Common myeloid progenitor, CD34-positive (primary cell): ENCODE measurements at regions of chr12 and their contacts with region 1.

Region 1: GRCh38 chr12:48765753-48766162 is 23.1 kb downstream of the ADCY6 start:
- DNase-seq: peak; percentile 22 to 69 (median 67)
- H3K4me3 ChIP-seq: peak overlapping the region in 2 of 7 experiments; percentile 12 to 26
- H3K27ac ChIP-seq: peak overlapping the region in 1 of 2 experiments; percentile 15
- H3K4me1 ChIP-seq: peaks cover 4 to 47% (median 19%) of the 10 kb centered on the region in 4 experiments
- H3K27me3 ChIP-seq: no peaks in the 10 kb centered on the region

Region 2: DNA sequence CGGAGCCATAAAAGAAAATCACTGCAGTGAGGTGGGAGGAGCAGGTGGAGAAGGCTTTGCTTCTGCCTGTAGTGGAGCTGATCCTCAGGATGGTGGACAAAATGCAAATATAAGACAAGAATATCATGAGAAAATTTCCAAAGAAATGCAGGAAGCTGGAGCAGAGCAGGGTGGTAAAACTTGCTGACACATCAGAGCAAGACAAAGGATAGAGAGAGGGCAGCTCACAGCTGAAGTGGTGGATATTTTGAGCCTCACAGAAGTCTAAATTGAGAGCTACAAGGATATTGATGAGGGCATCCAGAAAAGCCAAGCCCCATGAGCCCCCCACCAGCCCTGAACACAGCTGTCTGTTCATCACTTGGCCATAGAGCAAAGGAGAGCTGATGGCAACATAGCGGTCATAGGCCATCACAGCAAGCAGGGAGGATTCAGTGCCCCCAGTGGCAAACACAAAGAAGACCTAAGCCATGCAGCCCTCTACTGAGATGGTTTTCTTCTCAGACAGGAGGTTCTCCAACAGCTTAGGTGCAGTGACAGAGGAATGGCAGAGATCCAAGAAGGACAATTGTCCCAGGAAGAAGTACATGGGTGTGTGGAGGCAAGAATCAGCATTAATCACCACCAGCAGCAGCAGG is 323.4 kb before region 1 on chr12:
- CTCF ChIA-PET with region 1: no interaction called
- POLR2A ChIA-PET with region 1: no interaction called
- DNase-seq: peak in 1 of 3 donors; percentile 10
- H3K4me3 ChIP-seq: no peak overlapping the region
- H3K27ac ChIP-seq: no peak overlapping the region
- H3K4me1 ChIP-seq: no peaks in the 10 kb centered on the region
- H3K27me3 ChIP-seq: peaks cover 0 to 2% (median 0%) of the 10 kb centered on the region in 5 experiments

Region 3: DNA sequence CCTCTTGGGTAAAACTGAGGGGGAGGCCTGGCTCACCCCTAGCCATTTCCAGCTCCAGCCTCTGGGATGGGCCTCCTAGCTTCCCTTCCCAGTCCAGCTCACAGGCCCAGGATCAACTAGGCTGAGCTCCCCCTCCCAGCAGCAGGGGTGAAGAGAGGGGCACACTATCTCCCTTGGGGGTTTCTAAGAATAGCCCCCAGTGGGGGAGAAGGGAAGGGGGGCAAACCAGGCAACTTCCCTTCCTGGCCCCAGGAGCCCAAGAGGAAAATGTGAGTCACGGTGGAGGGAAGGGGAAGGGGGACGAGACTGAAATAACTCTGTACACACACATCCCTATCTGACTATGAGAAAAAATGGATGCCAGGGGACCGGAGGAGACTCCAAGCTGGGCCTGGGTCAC is 14.1 kb after region 1 on chr12:
- CTCF ChIA-PET with region 1: interaction called, 14 read pairs
- POLR2A ChIA-PET with region 1: no interaction called
- DNase-seq: peak; percentile 44 to 71 (median 68)
- H3K4me3 ChIP-seq: peak overlapping the region in 4 of 7 experiments; percentile 16 to 46 (median 33)
- H3K27ac ChIP-seq: peak overlapping the region in 1 of 2 experiments; percentile 32
- H3K4me1 ChIP-seq: peaks cover 0 to 28% (median 25%) of the 10 kb centered on the region in 4 experiments
- H3K27me3 ChIP-seq: no peaks in the 10 kb centered on the region